ENCODE measurements at regions of chr18 and their contacts with region 1.

Region 1: DNA sequence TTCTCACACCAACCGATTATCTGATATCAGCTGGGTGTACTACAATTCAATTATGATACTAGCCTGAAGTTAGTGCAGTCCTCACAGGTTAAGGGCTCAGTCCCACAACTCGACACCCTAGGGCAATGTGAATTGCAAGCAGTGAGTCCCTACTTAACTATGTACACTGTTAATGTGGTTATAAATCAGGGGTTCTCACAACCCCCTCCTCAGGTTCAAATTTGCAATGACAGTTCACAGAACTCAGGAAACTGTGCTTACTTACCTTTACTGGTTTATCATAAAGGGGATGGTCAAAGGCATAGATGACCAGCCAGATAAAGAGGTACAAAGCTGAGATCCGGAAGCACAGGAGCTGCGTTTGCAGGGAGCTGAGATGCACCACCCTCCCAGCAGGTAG is 1379.1 kb upstream of the CDH2 start:
- DNase-seq: no peak
- ATAC-seq: no peak
- H3K4me3 ChIP-seq: no peak overlapping the region
- H3K4me3 Mint-ChIP-seq: no peak overlapping the region
- H3K27ac ChIP-seq: no peak overlapping the region
- H3K27ac Mint-ChIP-seq: no peak overlapping the region
- H3K4me1 ChIP-seq: no peaks in the 10 kb centered on the region
- H3K4me1 Mint-ChIP-seq: no peaks in the 10 kb centered on the region
- H3K27me3 ChIP-seq: no peaks in the 10 kb centered on the region
- H3K27me3 Mint-ChIP-seq: no peaks in the 10 kb centered on the region
- CTCF ChIP-seq: no peak

Region 2: DNA sequence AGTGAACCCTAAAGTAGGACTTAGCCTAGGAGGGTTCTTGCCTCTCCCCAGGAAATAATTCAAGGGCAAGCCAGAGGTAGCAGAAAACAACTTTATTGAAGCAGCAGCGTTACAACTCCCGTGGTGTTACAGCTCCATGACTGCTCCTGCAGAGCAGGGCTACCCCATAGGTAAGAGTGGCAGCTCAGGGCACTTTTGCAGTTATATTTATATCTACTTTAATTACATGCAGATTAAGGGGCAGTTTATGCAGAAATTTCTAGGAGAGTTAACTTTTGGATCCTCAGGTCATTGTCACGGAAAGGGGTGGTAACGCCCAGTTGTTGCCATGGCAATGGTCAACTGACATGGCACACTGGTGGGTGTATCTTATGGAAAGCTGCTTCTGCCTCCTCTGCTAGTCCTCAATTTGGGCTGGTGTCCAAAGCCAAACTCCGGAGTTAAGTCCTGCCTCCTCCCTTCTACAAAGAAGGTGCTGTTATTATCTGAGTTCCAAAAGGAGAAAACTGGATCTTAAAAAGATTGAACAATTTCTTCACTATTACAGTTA is 73.5 kb after region 1 on chr18:
- CTCF ChIA-PET with region 1: no interaction called
- POLR2A ChIA-PET with region 1: no interaction called
- intact Hi-C with region 1: loop called in 1 of 2 experiments (anchors 10 kb)
- DNase-seq: no peak
- ATAC-seq: no peak
- H3K4me3 ChIP-seq: no peak overlapping the region
- H3K4me3 Mint-ChIP-seq: no peak overlapping the region
- H3K27ac ChIP-seq: no peak overlapping the region
- H3K27ac Mint-ChIP-seq: no peak overlapping the region
- H3K4me1 ChIP-seq: no peaks in the 10 kb centered on the region
- H3K4me1 Mint-ChIP-seq: no peaks in the 10 kb centered on the region
- H3K27me3 ChIP-seq: no peaks in the 10 kb centered on the region
- H3K27me3 Mint-ChIP-seq: no peaks in the 10 kb centered on the region
- CTCF ChIP-seq: no peak

Measured in CD4-positive, alpha-beta T cell (primary cell).